Activated CD4-positive, alpha-beta T cell treated with anti-CD3 and anti-CD28 coated beads for 36 hours (primary cell): ENCODE measurements at regions of chr2 and their contacts with region 1.

Region 1: DNA sequence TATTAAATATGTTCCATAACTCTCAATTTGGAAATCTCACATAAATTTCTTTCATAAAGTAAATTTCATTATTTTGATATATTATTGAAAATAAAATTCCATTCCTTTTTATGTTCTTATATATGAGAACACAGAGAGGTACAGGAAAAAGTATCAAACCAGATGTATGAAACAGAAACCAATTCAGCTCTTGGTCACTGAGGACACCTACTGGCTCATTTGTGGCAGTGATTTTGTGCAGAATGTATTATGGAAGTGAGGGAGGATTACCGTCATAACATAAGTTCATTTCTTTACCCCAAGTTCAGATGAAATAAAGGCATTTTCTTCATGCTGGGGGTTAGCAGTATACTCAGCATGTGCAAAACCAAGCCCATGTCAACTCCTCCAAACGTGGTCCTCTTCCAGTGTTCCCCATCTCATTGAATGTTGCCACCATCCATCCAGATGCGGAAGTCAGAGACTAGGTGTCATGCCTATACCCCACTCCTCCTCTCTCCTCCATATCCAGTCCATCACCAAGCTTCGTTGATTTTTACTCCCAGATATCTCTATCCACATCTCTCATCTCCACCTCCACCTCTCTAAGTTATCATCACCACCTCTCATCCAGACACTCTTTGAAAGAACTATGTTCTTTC is 41.7 kb upstream of the MALL start:
- DNase-seq: peak; percentile 44
- ATAC-seq: peak; percentile 83
- H3K4me3 Mint-ChIP-seq: no peak overlapping the region
- H3K27ac Mint-ChIP-seq: no peak overlapping the region
- H3K4me1 Mint-ChIP-seq: peaks cover 37% of the 10 kb centered on the region
- H3K27me3 Mint-ChIP-seq: peaks cover 2% of the 10 kb centered on the region

Region 2: DNA sequence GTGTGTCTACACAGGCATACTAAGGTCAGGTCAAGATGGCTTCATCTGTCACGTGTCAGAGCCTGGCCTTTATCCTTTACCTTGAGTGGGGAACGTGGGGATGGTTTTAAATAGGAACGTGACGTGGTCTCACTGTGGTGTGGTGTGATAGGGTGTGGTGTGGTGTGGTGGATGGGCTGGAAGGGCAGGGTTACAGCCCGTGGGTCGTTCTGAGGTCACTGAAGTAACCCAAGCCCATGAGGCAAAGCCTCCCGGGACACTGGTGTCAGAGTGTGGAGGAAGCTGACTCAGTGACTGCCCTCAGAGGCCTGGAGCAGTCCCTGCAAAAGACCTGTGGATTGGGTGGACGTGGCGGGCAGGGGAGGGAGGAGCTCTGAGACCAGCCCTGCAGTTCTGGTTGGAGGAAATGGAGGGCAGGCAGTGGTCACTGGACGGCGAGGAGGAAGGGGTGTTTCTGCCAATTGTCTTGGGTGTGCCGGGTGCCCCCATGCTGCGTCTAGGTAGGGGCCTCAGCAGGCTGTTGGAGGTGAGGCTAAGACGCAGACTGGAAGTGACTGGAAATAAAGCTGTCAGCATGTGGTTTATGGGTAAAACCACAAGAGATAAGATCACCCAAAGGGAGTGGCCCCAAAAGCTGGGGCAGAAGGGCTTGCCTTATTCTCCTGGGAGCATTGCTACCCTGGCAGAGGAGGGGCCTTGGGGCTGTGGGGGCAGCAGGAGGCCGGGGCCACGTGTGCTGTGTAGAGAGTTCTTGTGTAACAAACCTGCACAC is 943.4 kb before region 1 on chr2:
- CTCF ChIA-PET with region 1: no interaction called
- POLR2A ChIA-PET with region 1: no interaction called
- intact Hi-C with region 1: no loop called
- DNase-seq: peak; percentile 73
- ATAC-seq: peak; percentile 71
- H3K4me3 Mint-ChIP-seq: peak overlapping the region; percentile 38
- H3K27ac Mint-ChIP-seq: peak overlapping the region; percentile 87
- H3K4me1 Mint-ChIP-seq: peaks cover 78% of the 10 kb centered on the region
- H3K27me3 Mint-ChIP-seq: peaks cover 65% of the 10 kb centered on the region

Region 3: GRCh38 chr2:109331896-109332848 is 825.1 kb before region 1 on chr2:
- CTCF ChIA-PET with region 1: no interaction called
- POLR2A ChIA-PET with region 1: no interaction called
- intact Hi-C with region 1: no loop called
- DNase-seq: peak; percentile 41
- ATAC-seq: peak; percentile 34
- H3K4me3 Mint-ChIP-seq: peak overlapping the region; percentile 50
- H3K27ac Mint-ChIP-seq: peak overlapping the region; percentile 59
- H3K4me1 Mint-ChIP-seq: peaks cover 30% of the 10 kb centered on the region
- H3K27me3 Mint-ChIP-seq: peaks cover 6% of the 10 kb centered on the region

Region 4: GRCh38 chr2:110116033-110116710 is 41.1 kb before region 1 on chr2:
- CTCF ChIA-PET with region 1: interaction called, 5 read pairs
- POLR2A ChIA-PET with region 1: no interaction called
- intact Hi-C with region 1: loop called in 1 of 2 experiments (anchors 5 kb)
- DNase-seq: no peak
- ATAC-seq: peak; percentile 30
- H3K4me3 Mint-ChIP-seq: no peak overlapping the region
- H3K27ac Mint-ChIP-seq: no peak overlapping the region
- H3K4me1 Mint-ChIP-seq: peaks cover 8% of the 10 kb centered on the region
- H3K27me3 Mint-ChIP-seq: peaks cover 52% of the 10 kb centered on the region

Region 5: DNA sequence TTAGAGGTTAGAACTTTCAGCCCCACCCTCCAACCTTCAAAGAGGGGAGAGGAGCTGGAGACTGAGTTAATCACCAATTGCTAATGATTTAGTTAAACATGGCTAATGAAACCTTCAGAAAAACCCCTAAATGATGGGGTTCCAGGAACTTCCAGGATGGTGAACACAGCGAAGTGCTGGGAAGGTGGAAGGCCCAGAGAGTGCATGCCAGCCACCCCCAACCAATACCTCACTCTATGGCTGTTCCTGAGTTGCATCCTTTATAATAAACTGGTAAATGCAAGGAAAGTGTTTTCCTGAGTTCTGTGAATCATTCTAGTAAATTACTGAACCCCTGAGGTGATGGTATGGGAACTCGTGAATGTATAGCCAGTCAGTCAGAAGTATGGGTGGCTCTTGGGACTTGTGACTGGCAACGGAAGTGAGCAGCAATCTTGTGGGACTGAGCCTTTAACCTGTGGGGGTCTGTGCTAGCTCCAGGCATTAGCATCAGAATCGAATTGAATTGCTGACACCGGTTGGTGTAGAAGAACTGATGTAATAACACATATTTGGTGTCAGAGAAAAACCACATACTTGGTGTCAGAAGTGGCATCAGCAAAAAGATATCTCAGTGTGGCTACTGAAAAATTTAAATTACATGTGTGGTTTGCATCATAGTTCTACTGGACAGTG is 10.2 kb after region 1 on chr2:
- CTCF ChIA-PET with region 1: interaction called, 10 read pairs
- POLR2A ChIA-PET with region 1: no interaction called
- intact Hi-C with region 1: no loop called
- DNase-seq: no peak
- ATAC-seq: no peak
- H3K4me3 Mint-ChIP-seq: no peak overlapping the region
- H3K27ac Mint-ChIP-seq: no peak overlapping the region
- H3K4me1 Mint-ChIP-seq: peaks cover 4% of the 10 kb centered on the region
- H3K27me3 Mint-ChIP-seq: peaks cover 10% of the 10 kb centered on the region

Region 6: GRCh38 chr2:110204780-110205385 is 47.6 kb after region 1 on chr2 and contains the start of gene NPHP1:
- CTCF ChIA-PET with region 1: no interaction called
- POLR2A ChIA-PET with region 1: no interaction called
- intact Hi-C with region 1: loop called in 1 of 2 experiments (anchors 2 kb)
- DNase-seq: peak; percentile 89
- ATAC-seq: peak; percentile 89
- H3K4me3 Mint-ChIP-seq: peak within 1 kb of the TSS; percentile 79
- H3K27ac Mint-ChIP-seq: peak within 1 kb of the TSS; percentile 62
- H3K4me1 Mint-ChIP-seq: peaks cover 26% of the 10 kb centered on the region
- H3K27me3 Mint-ChIP-seq: no peaks in the 10 kb centered on the region
- total RNA-seq, gene NPHP1: 2.2 to 2.8 TPM